Vagina (tissue), 2 donors: ENCODE measurements at regions of chr11 and their contacts with region 1.

Region 1: DNA sequence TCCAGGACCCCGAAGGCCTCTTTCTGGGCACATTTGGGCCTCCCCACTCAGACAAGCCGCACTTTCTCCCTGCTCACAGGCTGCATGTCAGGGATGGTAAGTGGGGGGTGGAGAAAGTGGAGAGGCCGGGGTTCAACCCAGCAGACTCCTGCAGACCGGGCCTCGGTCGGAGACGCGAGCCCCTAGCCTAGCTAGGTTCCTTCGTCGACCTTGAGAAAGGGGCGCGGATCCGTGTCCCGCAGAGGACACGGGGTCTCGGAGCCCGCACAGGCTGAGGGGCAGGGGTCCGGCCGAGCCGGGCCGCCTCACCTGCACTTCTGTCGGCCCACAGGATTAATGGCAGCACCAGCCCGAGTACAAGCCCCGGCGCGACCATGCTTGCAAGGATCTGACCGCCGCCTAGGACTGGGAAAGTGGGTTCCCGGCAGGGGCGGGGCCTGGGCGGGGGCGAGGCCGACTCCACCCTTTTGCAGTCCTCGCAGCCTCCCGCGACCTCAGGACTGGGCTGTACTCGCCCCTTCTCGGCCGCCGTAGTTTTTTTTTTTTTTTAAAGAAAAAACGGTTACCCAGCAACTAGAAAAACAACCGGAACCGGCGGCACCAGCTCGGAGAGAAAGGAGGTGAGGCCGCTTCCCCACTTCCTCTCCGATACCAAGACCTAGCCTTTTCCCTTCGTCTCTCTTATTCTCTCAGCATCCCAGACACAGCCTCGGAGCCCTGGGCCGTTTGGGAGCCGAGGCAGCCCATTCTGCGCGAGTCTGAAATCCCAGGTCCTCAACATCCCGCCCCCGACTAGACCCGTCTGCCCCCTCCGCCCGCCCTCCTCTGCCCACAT is at the starts of genes SIAE and SPA17:
- DNase-seq: peak in 1 of 2 donors; percentile 97
- H3K4me3 ChIP-seq: peak within 1 kb of the TSS; percentile 51 to 78
- H3K27ac ChIP-seq: peak within 1 kb of the TSS; percentile 81
- H3K4me1 ChIP-seq: peaks cover 21% of the 10 kb centered on the region
- H3K27me3 ChIP-seq: no peaks in the 10 kb centered on the region
- CTCF ChIP-seq: no peak
- POLR2A ChIP-seq: no peak
- total RNA-seq, gene SIAE: 10.6 TPM
- total RNA-seq, gene SPA17: 1.7 TPM

Region 2: GRCh38 chr11:124569697-124570096 is 103.9 kb before region 1 on chr11 and contains the start of gene OR8A1:
- intact Hi-C with region 1: no loop called
- DNase-seq: no peak
- H3K4me3 ChIP-seq: no peak within 1 kb of the TSS
- H3K27ac ChIP-seq: no peak within 1 kb of the TSS
- H3K4me1 ChIP-seq: no peaks in the 10 kb centered on the region
- H3K27me3 ChIP-seq: no peaks in the 10 kb centered on the region
- CTCF ChIP-seq: no peak
- POLR2A ChIP-seq: no peak
- total RNA-seq, gene OR8A1: not detected

Region 3: DNA sequence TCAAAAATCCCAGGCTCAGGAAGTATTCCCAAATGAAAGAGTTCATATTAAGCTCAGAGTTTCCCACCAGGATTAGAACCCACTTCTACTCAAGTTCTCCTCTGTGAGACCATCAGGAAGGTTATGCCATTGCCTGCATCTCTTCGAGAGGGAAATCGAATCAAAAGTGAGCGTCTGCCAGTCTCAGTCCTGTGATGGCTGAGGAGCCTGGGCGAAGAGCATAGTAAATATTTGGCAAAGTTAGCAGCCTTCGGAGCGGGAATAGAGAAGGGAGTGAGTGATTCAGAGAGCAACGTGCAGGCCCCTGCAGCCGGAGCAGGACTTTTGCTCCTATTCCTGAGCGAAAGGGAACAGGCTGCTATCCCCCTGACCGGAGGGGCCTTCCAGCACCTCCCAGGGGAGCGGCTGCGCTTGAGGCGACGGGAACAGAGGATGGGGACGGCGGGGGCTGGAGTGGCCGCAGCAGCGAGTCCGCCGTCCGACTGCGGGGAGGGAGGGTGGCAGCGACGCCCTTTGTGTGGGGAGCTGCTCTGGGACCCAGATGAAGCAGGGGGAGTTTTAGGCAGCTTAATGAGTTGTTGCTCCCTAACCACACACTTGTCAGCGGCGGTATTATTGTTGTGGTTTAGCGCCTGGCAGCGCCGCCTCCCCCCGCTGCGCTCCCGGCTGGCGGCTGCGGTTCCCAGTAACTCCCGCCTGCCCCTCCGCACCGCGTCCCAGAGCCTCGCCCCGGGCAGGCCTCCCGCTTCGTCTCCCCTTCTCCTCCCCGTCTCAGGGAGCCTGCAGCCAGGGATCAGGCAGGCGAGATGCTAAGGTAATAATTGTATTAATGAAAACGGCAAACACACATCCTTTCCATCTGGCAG is 44.5 kb after region 1 on chr11:
- intact Hi-C with region 1: no loop called
- DNase-seq: no peak
- H3K4me3 ChIP-seq: peak overlapping the region; percentile 40 to 41
- H3K27ac ChIP-seq: peak overlapping the region; percentile 27
- H3K4me1 ChIP-seq: peaks cover 19% of the 10 kb centered on the region
- H3K27me3 ChIP-seq: no peaks in the 10 kb centered on the region
- CTCF ChIP-seq: no peak
- POLR2A ChIP-seq: no peak

Region 4: GRCh38 chr11:124746621-124747243 is 73.2 kb after region 1 on chr11:
- intact Hi-C with region 1: loop called (anchors 5 kb)
- DNase-seq: no peak
- H3K4me3 ChIP-seq: peak overlapping the region; percentile 48 to 55
- H3K27ac ChIP-seq: peak overlapping the region; percentile 65
- H3K4me1 ChIP-seq: peaks cover 22% of the 10 kb centered on the region
- H3K27me3 ChIP-seq: no peaks in the 10 kb centered on the region
- CTCF ChIP-seq: no peak
- POLR2A ChIP-seq: no peak

Region 5: DNA sequence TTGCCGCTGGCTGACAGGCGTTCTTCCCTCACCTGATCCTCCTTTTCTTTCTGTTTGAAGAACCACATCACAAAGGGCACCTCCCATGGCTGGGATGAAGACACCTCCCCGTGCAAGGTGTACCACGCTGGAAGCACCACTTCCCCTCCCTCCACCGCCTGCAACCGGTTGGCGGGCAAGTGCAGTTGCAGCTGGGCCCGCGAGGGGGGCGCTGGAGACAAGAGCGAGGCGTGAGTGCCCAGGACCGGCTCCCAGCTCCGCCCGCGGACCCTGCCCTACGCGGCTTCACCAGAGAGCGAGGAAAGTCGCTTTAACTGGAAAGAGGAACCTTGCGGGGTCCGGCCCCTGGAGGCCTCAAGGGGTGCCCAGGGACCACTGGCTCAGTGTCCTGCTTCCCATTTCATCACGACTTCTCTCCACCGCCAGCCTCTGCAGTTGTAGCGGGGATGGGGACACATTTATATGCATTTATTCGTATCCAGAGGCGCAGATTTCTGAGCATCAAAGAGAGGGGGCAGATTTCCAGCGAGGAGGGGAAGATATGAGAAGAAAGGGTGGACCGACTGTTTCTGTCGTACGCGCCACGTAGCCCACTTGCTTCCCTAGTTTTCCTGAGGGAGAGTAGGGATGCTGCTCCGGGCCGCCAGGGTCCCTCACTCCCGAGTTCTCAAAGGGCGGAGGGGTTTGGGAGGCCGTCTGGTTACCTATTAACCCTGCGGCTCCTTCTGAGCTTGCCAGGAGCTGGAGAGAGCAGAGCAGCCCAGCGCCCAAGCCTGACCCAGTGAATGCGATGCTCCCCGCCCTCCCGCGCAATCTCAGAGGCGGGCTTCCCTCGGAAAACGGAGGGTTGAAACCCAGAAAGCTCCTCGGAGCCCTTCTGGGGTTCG is 85.0 kb after region 1 on chr11:
- intact Hi-C with region 1: loop called (anchors 2 kb)
- DNase-seq: no peak
- H3K4me3 ChIP-seq: peak overlapping the region; percentile 50 to 53
- H3K27ac ChIP-seq: peak overlapping the region; percentile 71
- H3K4me1 ChIP-seq: peaks cover 50% of the 10 kb centered on the region
- H3K27me3 ChIP-seq: peaks cover 6% of the 10 kb centered on the region
- CTCF ChIP-seq: peak in 2 of 3 experiments; percentile 9 to 47
- POLR2A ChIP-seq: no peak

Region 6: GRCh38 chr11:124837491-124837856 is 163.9 kb after region 1 on chr11:
- intact Hi-C with region 1: loop called (anchors 5 kb)
- DNase-seq: peak in 1 of 2 donors; percentile 77
- H3K4me3 ChIP-seq: no peak overlapping the region
- H3K27ac ChIP-seq: no peak overlapping the region
- H3K4me1 ChIP-seq: peaks cover 13% of the 10 kb centered on the region
- H3K27me3 ChIP-seq: peaks cover 8% of the 10 kb centered on the region
- CTCF ChIP-seq: no peak
- POLR2A ChIP-seq: no peak